ENCODE measurements at regions of chr17 and their contacts with region 1.

Region 1: DNA sequence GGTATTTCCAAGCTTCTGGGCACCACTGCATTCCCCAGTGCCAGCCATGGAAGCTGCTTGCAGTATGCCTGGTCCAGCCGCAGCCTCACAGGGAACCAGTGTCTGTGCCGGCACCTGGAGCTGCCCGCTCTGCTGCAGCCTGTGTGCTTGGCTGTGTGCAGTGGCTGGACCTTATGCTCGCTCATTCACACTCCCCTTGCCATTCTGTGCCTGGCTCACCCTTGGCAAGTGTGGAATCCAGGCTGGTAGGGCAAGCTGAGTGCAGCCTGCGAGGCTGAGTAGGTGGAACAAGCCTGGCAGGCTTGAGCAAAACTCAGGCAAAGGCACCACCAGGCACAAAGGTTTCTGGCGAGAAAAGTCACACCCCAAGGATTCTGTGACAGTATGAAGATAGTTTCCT is 144.0 kb downstream of the MYO1D start:
- DNase-seq: no peak
- H3K4me3 ChIP-seq: no peak overlapping the region
- H3K27ac ChIP-seq: no peak overlapping the region
- H3K4me1 ChIP-seq: no peaks in the 10 kb centered on the region
- H3K27me3 ChIP-seq: no peaks in the 10 kb centered on the region
- CTCF ChIP-seq: no peak

Region 2: DNA sequence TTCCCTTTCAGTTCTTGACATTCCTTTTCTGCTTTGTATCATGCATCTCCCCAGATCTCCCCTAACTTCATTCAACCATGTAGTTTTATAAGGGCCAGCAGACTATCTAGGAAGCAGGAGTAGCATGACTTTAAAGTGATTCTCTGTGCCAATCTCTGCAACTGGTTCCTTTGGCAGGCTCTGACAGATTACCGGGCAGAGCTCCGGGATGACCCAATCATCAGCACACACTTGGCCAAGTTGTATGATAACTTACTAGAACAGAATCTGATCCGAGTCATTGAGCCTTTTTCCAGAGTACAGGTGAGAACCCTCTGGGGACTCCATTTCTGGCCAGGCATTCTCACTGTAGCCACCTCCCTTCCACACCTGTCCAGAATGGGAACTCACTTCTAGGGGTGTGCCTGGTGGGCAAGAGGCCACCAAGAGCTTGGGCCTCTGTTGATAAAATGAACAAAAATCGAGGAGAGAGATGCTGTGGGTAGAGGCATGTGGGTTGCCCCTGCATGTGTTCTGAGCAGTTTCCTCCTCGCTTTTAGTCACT is 253.8 kb before region 1 on chr17:
- intact Hi-C with region 1: loop called (anchors 10 kb)
- DNase-seq: no peak
- H3K4me3 ChIP-seq: no peak overlapping the region
- H3K27ac ChIP-seq: no peak overlapping the region
- H3K4me1 ChIP-seq: no peaks in the 10 kb centered on the region
- H3K27me3 ChIP-seq: no peaks in the 10 kb centered on the region
- CTCF ChIP-seq: no peak